ENCODE measurements at regions of chr1 and their contacts with region 1.

Region 1: DNA sequence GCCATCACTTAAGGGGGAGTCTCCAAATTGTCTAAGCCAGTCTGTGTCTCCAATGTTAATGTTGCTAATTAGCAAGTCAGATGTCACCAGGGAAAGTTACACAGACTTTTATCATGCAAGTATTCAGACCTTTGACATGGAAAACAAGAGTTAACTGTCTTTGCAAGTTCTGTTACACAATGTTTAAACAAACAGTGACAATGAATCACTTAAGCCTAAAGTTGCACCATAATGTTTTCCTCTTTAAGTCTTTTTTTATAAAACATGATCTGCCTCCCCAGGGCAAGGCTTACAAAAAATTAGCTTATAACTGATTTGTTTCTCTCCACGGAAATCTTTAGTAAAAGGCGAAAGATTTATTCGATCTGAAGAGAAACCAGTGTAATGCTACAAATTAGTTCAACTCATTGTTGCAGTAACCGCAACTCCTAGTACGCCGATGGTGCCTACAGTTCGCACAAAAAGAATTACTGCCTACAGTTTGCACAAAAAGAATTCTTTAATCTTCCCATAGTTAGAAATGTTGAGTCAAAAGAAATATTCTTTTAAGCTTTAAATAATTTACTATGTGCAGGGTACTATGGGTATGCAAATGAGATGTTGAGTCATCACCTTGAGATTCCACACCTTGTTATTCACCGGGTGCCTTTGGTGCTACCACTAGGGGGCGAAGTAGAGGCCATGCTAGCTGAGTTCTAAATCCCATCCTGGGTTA is 45.3 kb downstream of the HHAT start:
- DNase-seq: peak; percentile 48
- H3K4me3 Mint-ChIP-seq: no peak overlapping the region
- H3K27ac Mint-ChIP-seq: peak overlapping the region; percentile 32
- H3K4me1 Mint-ChIP-seq: peaks cover 10% of the 10 kb centered on the region
- H3K27me3 Mint-ChIP-seq: peaks cover 22% of the 10 kb centered on the region

Region 2: GRCh38 chr1:210332719-210333398 is 41.2 kb before region 1 on chr1:
- intact Hi-C with region 1: loop called (anchors 2 kb)
- DNase-seq: peak; percentile 60
- H3K4me3 Mint-ChIP-seq: peak overlapping the region; percentile 8
- H3K27ac Mint-ChIP-seq: no peak overlapping the region
- H3K4me1 Mint-ChIP-seq: peaks cover 31% of the 10 kb centered on the region
- H3K27me3 Mint-ChIP-seq: peaks cover 25% of the 10 kb centered on the region

Region 3: DNA sequence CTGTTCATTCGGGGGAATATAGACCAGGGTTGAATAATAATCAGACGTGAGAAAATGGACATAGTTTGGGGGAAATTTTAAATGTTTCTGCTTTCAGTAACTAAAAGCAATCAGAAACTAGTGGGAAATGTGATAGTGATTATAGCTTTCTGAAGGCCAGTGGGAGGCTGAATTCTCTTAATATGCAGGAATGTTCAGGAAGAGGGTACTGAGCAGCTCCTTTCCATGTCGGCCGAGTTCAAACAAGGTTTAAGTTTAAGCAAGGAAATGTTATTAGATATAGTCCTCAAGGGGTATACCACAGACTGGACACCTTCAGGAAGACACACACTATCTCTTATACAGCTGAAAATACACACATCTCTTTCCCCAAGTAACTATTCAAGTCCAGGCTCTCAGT is 60.2 kb after region 1 on chr1:
- intact Hi-C with region 1: no loop called
- DNase-seq: no peak
- H3K4me3 Mint-ChIP-seq: no peak overlapping the region
- H3K27ac Mint-ChIP-seq: no peak overlapping the region
- H3K4me1 Mint-ChIP-seq: no peaks in the 10 kb centered on the region
- H3K27me3 Mint-ChIP-seq: no peaks in the 10 kb centered on the region